ENCODE measurements at regions of chr15 and their contacts with region 1.

Region 1: DNA sequence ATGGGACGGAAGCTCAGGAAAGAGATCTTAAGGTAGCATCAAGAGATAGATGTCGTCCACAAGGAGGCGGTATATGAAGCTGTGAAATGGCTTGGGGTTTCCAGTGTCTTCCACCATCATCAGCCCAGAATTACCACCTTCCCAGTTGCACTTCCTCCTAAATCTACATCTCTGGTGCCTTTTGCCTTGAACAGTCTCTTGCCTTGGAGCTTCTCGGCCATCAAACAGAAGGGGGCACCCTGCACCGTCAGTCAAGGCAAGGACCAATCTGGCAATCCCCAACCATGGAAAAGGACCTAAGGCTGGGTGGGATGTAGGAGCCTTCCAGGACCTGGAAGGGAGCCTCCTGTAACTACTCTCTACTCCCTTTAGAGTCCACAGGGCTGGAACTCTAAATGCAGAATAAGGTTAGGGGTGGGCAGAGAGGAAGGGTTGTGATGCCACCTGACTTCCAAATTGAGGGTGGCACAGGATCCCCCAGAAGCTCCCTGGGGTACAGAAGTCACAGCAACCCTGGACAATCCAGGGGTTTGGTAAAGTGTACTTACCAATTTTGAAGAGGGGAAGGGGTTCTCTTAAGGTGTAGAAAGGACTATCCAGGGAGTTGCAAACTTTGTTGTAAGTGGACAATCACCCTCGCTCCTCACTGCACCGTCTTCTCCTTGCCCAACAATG is 1.0 kb upstream of the RYR3 start:
- DNase-seq: peak in 1 of 2 experiments; percentile 49
- H3K4me3 ChIP-seq: peak overlapping the region in 2 of 4 experiments; percentile 55 to 72; a peak in 3 of 8 replicates
- H3K27ac ChIP-seq: no peak overlapping the region
- H3K4me1 ChIP-seq: peaks cover 0 to 2% (median 0%) of the 10 kb centered on the region in 4 experiments; a peak in 3 of 7 replicates
- H3K27me3 ChIP-seq: peaks cover 15 to 37% (median 32%) of the 10 kb centered on the region in 4 experiments
- CTCF ChIP-seq: peak; percentile 42 to 63 (median 50)
- EP300 ChIP-seq: no peak
- POLR2A ChIP-seq: no peak
- RAD21 ChIP-seq: peak; percentile 70 to 77

Region 2: GRCh38 chr15:33236841-33237509 is 72.8 kb before region 1 on chr15:
- CTCF ChIA-PET with region 1: no interaction called
- POLR2A ChIA-PET with region 1: no interaction called
- DNase-seq: no peak
- H3K4me3 ChIP-seq: no peak overlapping the region
- H3K27ac ChIP-seq: no peak overlapping the region
- H3K4me1 ChIP-seq: peaks cover 0 to 4% (median under 1%) of the 10 kb centered on the region in 4 experiments; a peak in 1 of 7 replicates
- H3K27me3 ChIP-seq: no peaks in the 10 kb centered on the region
- CTCF ChIP-seq: no peak
- EP300 ChIP-seq: no peak
- POLR2A ChIP-seq: no peak
- RAD21 ChIP-seq: no peak

Region 3: GRCh38 chr15:33298631-33299030 is 11.1 kb before region 1 on chr15:
- CTCF ChIA-PET with region 1: interaction called, 20 read pairs
- POLR2A ChIA-PET with region 1: no interaction called
- DNase-seq: no peak
- H3K4me3 ChIP-seq: no peak overlapping the region
- H3K27ac ChIP-seq: no peak overlapping the region
- H3K4me1 ChIP-seq: no peaks in the 10 kb centered on the region
- H3K27me3 ChIP-seq: no peaks in the 10 kb centered on the region
- CTCF ChIP-seq: no peak
- EP300 ChIP-seq: no peak
- POLR2A ChIP-seq: no peak
- RAD21 ChIP-seq: no peak

Region 4: GRCh38 chr15:33448961-33449606 is 139.3 kb after region 1 on chr15:
- CTCF ChIA-PET with region 1: no interaction called
- POLR2A ChIA-PET with region 1: no interaction called
- DNase-seq: no peak
- H3K4me3 ChIP-seq: no peak overlapping the region
- H3K27ac ChIP-seq: no peak overlapping the region; the same call in 1 of the 2 replicates
- H3K4me1 ChIP-seq: peaks cover 0 to 5% (median under 1%) of the 10 kb centered on the region in 4 experiments; a peak in 1 of 7 replicates
- H3K27me3 ChIP-seq: no peaks in the 10 kb centered on the region; a peak in 1 of 7 replicates
- CTCF ChIP-seq: no peak
- EP300 ChIP-seq: no peak
- POLR2A ChIP-seq: no peak
- RAD21 ChIP-seq: no peak

Region 5: DNA sequence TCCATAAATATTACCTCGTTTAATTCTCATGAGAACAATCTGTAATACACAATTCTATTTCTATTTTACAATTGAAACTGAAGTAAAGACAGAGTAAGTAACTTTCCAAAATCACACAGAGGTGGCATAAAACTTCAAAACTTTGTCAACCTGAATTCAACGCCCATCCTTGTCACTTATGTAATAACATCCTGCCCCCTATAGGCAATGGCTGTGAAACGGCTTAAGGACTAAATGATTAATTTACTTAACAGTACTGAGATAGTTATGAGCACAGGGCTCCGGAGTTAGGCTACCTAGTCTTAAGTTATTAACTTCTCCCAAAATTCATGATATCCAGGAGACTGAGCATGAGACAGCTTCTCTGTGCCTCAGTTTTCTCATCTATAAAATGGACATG is 365.5 kb after region 1 on chr15:
- CTCF ChIA-PET with region 1: interaction called, 11 read pairs
- POLR2A ChIA-PET with region 1: no interaction called
- DNase-seq: no peak
- H3K4me3 ChIP-seq: no peak overlapping the region
- H3K27ac ChIP-seq: no peak overlapping the region
- H3K4me1 ChIP-seq: no peaks in the 10 kb centered on the region
- H3K27me3 ChIP-seq: no peaks in the 10 kb centered on the region
- CTCF ChIP-seq: peak in 2 of 3 experiments; percentile 62 to 83; a peak in 3 of 4 replicates
- EP300 ChIP-seq: no peak
- POLR2A ChIP-seq: no peak
- RAD21 ChIP-seq: peak; percentile 79 to 83